Activated CD4-positive, alpha-beta T cell treated with anti-CD3 and anti-CD28 coated beads for 36 hours (primary cell): ENCODE measurements at regions of chr12 and their contacts with region 1.

Region 1: DNA sequence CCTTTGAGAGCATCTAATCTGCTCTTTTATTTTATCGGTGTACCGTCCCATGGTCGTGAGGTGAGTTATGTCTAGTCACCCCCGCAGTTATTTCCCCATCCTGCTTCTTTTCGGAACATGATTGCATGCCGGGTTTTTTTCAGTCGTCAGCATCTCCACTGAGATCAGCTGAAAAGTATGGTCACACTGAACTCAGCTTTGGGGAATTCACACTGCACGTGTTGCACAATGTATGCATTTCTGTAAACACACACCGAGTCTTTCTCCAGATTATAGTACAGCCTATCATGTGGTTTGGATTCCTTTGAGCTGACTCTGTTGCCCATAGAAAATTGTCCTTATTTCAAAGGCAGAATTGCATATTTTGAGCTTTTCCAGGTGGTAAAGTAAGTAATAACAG is 24.6 kb downstream of the PLXNC1 start:
- DNase-seq: no peak
- ATAC-seq: no peak
- H3K4me3 Mint-ChIP-seq: no peak overlapping the region
- H3K27ac Mint-ChIP-seq: no peak overlapping the region
- H3K4me1 Mint-ChIP-seq: peaks cover 73% of the 10 kb centered on the region
- H3K27me3 Mint-ChIP-seq: no peaks in the 10 kb centered on the region

Region 2: DNA sequence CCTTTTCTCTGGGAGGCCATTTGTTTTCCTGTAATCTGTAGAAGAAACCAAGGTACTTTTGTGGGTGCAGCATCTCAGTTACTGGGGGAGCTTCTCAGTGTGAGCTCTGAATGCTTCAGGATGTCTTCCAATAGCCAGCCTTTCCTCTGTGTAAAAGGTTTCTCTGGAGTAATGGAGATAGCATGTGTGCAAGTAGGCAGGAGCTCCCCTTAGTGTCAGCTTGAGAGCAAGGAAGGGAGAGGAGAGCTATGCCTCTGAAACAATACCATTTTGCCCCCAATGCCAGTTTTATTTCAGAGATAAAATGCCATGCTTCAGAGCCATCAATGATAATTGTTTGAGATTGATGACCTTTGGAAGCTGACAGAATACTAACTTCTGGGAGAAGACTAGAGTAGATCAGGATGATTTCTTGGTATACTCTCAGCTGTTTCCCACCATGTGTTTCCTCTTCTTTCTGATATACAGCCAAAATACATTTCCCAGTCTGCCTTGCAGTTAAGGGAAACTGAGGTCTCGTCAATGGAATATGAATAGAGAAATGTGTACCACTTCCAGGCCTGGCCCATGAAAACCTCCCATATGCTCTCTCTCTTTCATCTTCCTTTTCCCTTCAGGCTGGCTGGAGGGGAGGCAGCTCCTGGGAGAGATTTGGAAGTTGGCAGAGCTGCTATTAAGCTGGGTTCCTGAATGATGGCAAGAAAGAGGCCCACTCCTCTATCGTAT is 370.1 kb before region 1 on chr12:
- CTCF ChIA-PET with region 1: no interaction called
- POLR2A ChIA-PET with region 1: no interaction called
- intact Hi-C with region 1: no loop called
- DNase-seq: no peak
- ATAC-seq: no peak
- H3K4me3 Mint-ChIP-seq: no peak overlapping the region
- H3K27ac Mint-ChIP-seq: no peak overlapping the region
- H3K4me1 Mint-ChIP-seq: peaks cover 45% of the 10 kb centered on the region
- H3K27me3 Mint-ChIP-seq: no peaks in the 10 kb centered on the region

Region 3: GRCh38 chr12:94157181-94157580 is 15.8 kb before region 1 on chr12:
- CTCF ChIA-PET with region 1: interaction called, 4 read pairs
- POLR2A ChIA-PET with region 1: interaction called, 12 read pairs
- intact Hi-C with region 1: no loop called
- DNase-seq: no peak
- ATAC-seq: no peak
- H3K4me3 Mint-ChIP-seq: no peak overlapping the region
- H3K27ac Mint-ChIP-seq: no peak overlapping the region
- H3K4me1 Mint-ChIP-seq: peaks cover 13% of the 10 kb centered on the region
- H3K27me3 Mint-ChIP-seq: peaks cover 1% of the 10 kb centered on the region

Region 4: DNA sequence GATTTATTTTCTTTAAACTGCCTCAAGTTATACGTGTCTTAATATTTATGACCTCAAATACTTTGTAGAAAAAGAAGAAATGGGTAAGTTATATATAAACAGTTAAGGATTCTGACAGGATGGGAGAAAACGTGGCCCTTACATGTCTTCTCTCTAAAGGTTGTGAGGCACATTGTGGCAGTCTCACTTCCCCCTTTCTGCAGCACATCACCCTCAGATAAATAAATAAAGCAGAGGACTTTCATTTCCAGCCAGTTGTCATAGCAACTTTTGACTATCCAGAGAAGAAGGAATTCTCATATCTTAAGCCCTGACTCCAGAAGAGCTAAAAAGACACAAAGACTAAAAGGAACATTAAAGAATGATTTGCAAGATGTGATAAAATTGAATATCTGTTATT is 315.5 kb after region 1 on chr12:
- CTCF ChIA-PET with region 1: no interaction called
- POLR2A ChIA-PET with region 1: no interaction called
- intact Hi-C with region 1: no loop called
- DNase-seq: no peak
- ATAC-seq: no peak
- H3K4me3 Mint-ChIP-seq: no peak overlapping the region
- H3K27ac Mint-ChIP-seq: no peak overlapping the region
- H3K4me1 Mint-ChIP-seq: no peaks in the 10 kb centered on the region
- H3K27me3 Mint-ChIP-seq: peaks cover 3% of the 10 kb centered on the region